Sigmoid colon (tissue), 7 donors: ENCODE measurements at regions of chr9 and their contacts with region 1.

Region 1: GRCh38 chr9:114348906-114349482 is 19.3 kb downstream of the ORM2 start:
- DNase-seq: peak; percentile 95
- H3K4me3 ChIP-seq: no peak overlapping the region
- H3K27ac ChIP-seq: peak overlapping the region; percentile 75 to 84 (median 81)
- H3K4me1 ChIP-seq: peaks cover 0 to 45% (median 30%) of the 10 kb centered on the region in 4 donors
- H3K27me3 ChIP-seq: no peaks in the 10 kb centered on the region
- CTCF ChIP-seq: no peak
- EP300 ChIP-seq: peak in 2 of 4 donors; percentile 43 to 78
- POLR2A ChIP-seq: no peak

Region 2: DNA sequence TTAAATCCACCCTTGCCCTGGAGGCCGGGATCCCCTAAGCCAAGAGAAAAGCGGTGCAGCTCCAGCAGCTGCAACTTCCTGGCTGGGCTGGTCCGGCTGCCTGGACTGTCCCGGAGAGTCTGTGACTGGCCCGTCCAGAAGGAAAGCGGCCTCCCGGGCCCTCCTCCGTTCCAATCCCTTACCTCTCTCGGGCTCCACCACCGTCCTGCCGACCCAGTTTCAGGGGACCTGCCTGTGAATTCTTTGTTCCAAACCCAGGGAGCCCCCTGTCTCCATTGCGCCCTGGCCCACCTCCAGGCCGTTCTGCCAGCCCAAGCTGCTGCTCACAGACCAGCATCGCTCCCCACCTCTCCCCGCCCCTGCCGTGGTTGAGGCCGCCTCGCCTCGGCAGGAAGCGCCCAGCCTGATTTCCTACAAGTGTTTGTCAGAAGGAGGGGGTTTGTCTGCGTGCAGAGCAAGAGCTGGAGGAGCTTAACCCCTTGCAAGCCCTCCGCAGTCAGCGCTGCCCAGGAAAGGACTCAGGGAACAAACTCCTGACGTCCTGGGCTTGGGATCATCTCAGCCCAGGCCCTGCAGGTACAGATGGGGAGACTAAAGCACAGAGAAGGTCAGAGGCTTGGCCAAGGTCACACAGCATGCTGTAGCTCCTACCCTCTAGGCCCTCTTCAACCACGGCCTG is 38.8 kb after region 1 on chr9 and contains the start of gene AKNA:
- intact Hi-C with region 1: loop called (anchors 2 kb)
- DNase-seq: peak; percentile 92
- H3K4me3 ChIP-seq: peak within 1 kb of the TSS; percentile 49 to 64 (median 61)
- H3K27ac ChIP-seq: peak within 1 kb of the TSS; percentile 84 to 91 (median 88)
- H3K4me1 ChIP-seq: peaks cover 0 to 66% (median 51%) of the 10 kb centered on the region in 4 donors
- H3K27me3 ChIP-seq: no peaks in the 10 kb centered on the region
- CTCF ChIP-seq: no peak
- EP300 ChIP-seq: no peak
- POLR2A ChIP-seq: peak; percentile 81 to 83
- total RNA-seq, gene AKNA: 13.6 to 18.6 (median 17.7) TPM

Region 3: GRCh38 chr9:114397848-114398605 is 49.0 kb after region 1 on chr9:
- intact Hi-C with region 1: loop called (anchors 2 kb)
- DNase-seq: peak; percentile 99
- H3K4me3 ChIP-seq: peak overlapping the region; percentile 65 to 81 (median 78)
- H3K27ac ChIP-seq: peak overlapping the region; percentile 81 to 86 (median 84)
- H3K4me1 ChIP-seq: peaks cover 0 to 34% (median 26%) of the 10 kb centered on the region in 4 donors
- H3K27me3 ChIP-seq: no peaks in the 10 kb centered on the region
- CTCF ChIP-seq: no peak
- EP300 ChIP-seq: peak in 1 of 4 donors; percentile 53
- POLR2A ChIP-seq: peak; percentile 36 to 49

Region 4: GRCh38 chr9:114505187-114506081 is 156.4 kb after region 1 on chr9 and contains the start of gene WHRN:
- intact Hi-C with region 1: loop called (anchors 2 kb)
- DNase-seq: peak; percentile 98
- H3K4me3 ChIP-seq: peak within 1 kb of the TSS; percentile 57 to 86 (median 70)
- H3K27ac ChIP-seq: peak within 1 kb of the TSS; percentile 80 to 93 (median 88)
- H3K4me1 ChIP-seq: peaks cover 0 to 54% (median 32%) of the 10 kb centered on the region in 4 donors
- H3K27me3 ChIP-seq: no peaks in the 10 kb centered on the region
- CTCF ChIP-seq: no peak
- EP300 ChIP-seq: peak in 2 of 4 donors; percentile 49 to 65
- POLR2A ChIP-seq: peak; percentile 38 to 61
- total RNA-seq, gene WHRN: 4.6 to 7.8 (median 6.3) TPM